PC-9 (cell line): ENCODE measurements at regions of chr13 and their contacts with region 1.

Region 1: DNA sequence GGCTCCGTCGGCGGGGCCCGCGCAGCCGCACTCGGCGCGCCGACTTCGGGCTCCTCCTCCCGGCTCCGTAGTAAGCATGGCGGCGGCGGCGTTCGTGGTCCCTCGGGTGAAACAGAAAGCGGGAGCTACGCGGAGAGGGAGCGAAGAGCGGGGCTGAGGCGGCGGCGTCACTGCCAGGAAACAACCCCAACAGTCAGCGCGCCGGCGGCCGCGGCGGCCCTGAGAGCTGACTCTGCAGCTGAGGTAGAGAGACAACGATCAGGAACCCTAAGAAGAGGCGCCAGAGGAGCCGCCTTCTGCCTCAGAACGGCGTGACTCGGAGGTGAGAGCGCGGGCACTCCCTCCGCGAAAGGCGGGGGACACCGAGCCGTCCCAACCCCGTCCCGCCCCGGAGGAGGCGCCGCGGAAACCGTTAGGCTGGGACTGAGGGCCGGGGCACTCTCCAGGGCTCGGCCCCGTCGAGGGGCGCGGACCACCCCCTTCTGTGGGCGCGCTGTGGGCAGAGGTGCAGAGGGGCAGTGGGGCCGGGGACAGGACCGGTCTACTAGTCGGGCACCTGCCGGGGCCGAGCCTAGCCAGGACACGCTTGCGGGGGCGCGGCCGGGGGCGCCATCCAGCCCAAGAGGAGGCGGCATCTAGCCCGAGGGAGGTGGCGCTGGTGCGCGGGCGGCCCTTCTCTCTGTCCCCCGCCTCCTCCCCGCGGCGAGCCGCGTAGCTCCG is at the start of gene FNDC3A:
- DNase-seq: peak; percentile 67 to 89
- H3K4me3 ChIP-seq: peak within 1 kb of the TSS; percentile 59
- H3K27ac ChIP-seq: peak within 1 kb of the TSS; percentile 84
- H3K4me1 ChIP-seq: peaks cover 20% of the 10 kb centered on the region
- H3K27me3 ChIP-seq: no peaks in the 10 kb centered on the region
- CTCF ChIP-seq: no peak
- total RNA-seq, gene FNDC3A: 29.7 and 34.3 TPM in 2 replicates

Region 2: DNA sequence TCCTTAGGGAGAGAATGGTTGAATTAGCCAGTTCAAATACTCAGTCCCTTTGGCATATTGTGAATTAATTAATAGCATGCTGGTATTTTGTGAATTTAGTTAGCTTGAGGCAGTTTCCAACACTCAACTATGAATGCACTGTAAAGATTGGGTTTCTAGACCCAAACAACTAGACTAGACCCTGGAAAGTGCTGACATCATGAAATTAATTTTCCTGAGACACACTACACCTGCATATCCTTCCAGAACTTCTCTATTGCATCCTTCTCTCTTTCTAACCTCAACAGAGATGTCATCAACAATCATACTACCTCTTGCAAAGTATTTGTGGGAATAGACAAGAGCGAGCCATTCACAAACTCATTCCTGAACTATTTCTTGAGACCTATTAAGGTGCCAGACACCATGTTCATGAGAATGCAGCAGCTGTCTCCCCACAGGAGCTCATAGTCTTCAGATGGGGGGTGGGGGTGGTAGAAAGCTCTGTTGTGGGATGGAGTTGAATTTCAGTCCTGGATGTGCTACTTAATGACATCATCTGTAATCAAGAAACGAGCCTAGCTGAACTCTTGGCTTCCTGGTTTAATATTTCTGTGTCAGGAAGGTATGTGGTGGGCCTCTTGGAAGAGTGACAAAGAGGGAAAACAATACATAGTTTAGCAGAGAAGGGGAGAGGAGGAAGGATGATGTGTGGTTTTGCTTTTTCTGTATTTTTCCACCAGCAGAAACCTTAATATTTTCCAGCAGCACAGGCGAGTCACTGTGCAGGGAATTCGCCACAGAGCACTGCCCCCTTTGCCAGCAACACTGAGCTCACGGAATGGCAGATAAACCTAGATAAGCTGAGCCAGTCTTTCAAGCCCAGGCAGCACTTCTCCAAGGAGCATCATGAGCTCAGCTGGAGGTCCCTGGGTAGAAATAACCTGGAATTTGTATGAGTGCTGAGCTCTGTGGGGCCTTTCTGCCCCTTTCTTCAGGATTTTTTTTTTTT is 375.3 kb before region 1 on chr13:
- CTCF ChIA-PET with region 1: no interaction called
- POLR2A ChIA-PET with region 1: no interaction called
- intact Hi-C with region 1: no loop called
- DNase-seq: no peak
- H3K4me3 ChIP-seq: no peak overlapping the region
- H3K27ac ChIP-seq: no peak overlapping the region
- H3K4me1 ChIP-seq: no peaks in the 10 kb centered on the region
- H3K27me3 ChIP-seq: no peaks in the 10 kb centered on the region
- CTCF ChIP-seq: no peak

Region 3: GRCh38 chr13:48783181-48783630 is 192.8 kb before region 1 on chr13:
- CTCF ChIA-PET with region 1: no interaction called
- POLR2A ChIA-PET with region 1: no interaction called
- intact Hi-C with region 1: loop called (anchors 5 kb)
- DNase-seq: peak in 1 of 2 experiments; percentile 45
- H3K4me3 ChIP-seq: no peak overlapping the region
- H3K27ac ChIP-seq: no peak overlapping the region
- H3K4me1 ChIP-seq: no peaks in the 10 kb centered on the region
- H3K27me3 ChIP-seq: no peaks in the 10 kb centered on the region
- CTCF ChIP-seq: no peak

Region 4: GRCh38 chr13:48923376-48923775 is 52.6 kb before region 1 on chr13:
- CTCF ChIA-PET with region 1: no interaction called
- POLR2A ChIA-PET with region 1: no interaction called
- intact Hi-C with region 1: no loop called
- DNase-seq: no peak
- H3K4me3 ChIP-seq: no peak overlapping the region
- H3K27ac ChIP-seq: no peak overlapping the region
- H3K4me1 ChIP-seq: no peaks in the 10 kb centered on the region
- H3K27me3 ChIP-seq: no peaks in the 10 kb centered on the region
- CTCF ChIP-seq: no peak

Region 5: GRCh38 chr13:49098771-49099512 is 122.9 kb after region 1 on chr13:
- CTCF ChIA-PET with region 1: no interaction called
- POLR2A ChIA-PET with region 1: no interaction called
- intact Hi-C with region 1: loop called (anchors 2 kb)
- DNase-seq: peak; percentile 10 to 50
- H3K4me3 ChIP-seq: no peak overlapping the region; the same call in 1 of the 2 replicates
- H3K27ac ChIP-seq: peak overlapping the region; percentile 68
- H3K4me1 ChIP-seq: peaks cover 34% of the 10 kb centered on the region
- H3K27me3 ChIP-seq: no peaks in the 10 kb centered on the region
- CTCF ChIP-seq: peak; percentile 62

Region 6: GRCh38 chr13:49247643-49248621 is 271.9 kb after region 1 on chr13 and contains the start of gene CDADC1:
- CTCF ChIA-PET with region 1: no interaction called
- POLR2A ChIA-PET with region 1: no interaction called
- intact Hi-C with region 1: loop called (anchors 5 kb)
- DNase-seq: peak; percentile 84 to 93
- H3K4me3 ChIP-seq: peak within 1 kb of the TSS; percentile 76
- H3K27ac ChIP-seq: peak within 1 kb of the TSS; percentile 26; the same call in 1 of the 2 replicates
- H3K4me1 ChIP-seq: peaks cover 13% of the 10 kb centered on the region
- H3K27me3 ChIP-seq: peaks cover 28% of the 10 kb centered on the region
- CTCF ChIP-seq: no peak
- total RNA-seq, gene CDADC1: 12.4 and 12.9 TPM in 2 replicates